IMR-90 (cell line): ENCODE measurements at regions of chr3 and their contacts with region 1.

Region 1: GRCh38 chr3:38521391-38521987 is 25.3 kb downstream of the EXOG start:
- DNase-seq: peak; percentile 75
- ATAC-seq: peak; percentile 67
- H3K4me3 ChIP-seq: no peak overlapping the region
- H3K27ac ChIP-seq: no peak overlapping the region
- H3K4me1 ChIP-seq: peaks cover 5% of the 10 kb centered on the region
- H3K27me3 ChIP-seq: no peaks in the 10 kb centered on the region
- CTCF ChIP-seq: peak; percentile 84
- POLR2A ChIP-seq: no peak
- RAD21 ChIP-seq: peak; percentile 75

Region 2: GRCh38 chr3:37202035-37202434 is 1319.5 kb before region 1 on chr3:
- CTCF ChIA-PET with region 1: no interaction called
- POLR2A ChIA-PET with region 1: no interaction called
- dilution Hi-C with region 1: no loop called
- in situ Hi-C with region 1: no loop called
- intact Hi-C with region 1: no loop called
- DNase-seq: no peak
- ATAC-seq: no peak
- H3K4me3 ChIP-seq: no peak overlapping the region
- H3K27ac ChIP-seq: no peak overlapping the region
- H3K4me1 ChIP-seq: peaks cover 10% of the 10 kb centered on the region; the same call in 1 of the 2 replicates
- H3K27me3 ChIP-seq: no peaks in the 10 kb centered on the region
- CTCF ChIP-seq: no peak
- POLR2A ChIP-seq: no peak
- RAD21 ChIP-seq: no peak

Region 3: GRCh38 chr3:37627951-37628620 is 893.4 kb before region 1 on chr3:
- CTCF ChIA-PET with region 1: no interaction called
- POLR2A ChIA-PET with region 1: no interaction called
- dilution Hi-C with region 1: no loop called
- in situ Hi-C with region 1: no loop called
- intact Hi-C with region 1: no loop called
- DNase-seq: no peak
- ATAC-seq: no peak
- H3K4me3 ChIP-seq: no peak overlapping the region
- H3K27ac ChIP-seq: no peak overlapping the region
- H3K4me1 ChIP-seq: no peaks in the 10 kb centered on the region
- H3K27me3 ChIP-seq: no peaks in the 10 kb centered on the region; the same call in 1 of the 2 replicates
- CTCF ChIP-seq: no peak
- POLR2A ChIP-seq: no peak
- RAD21 ChIP-seq: no peak

Region 4: DNA sequence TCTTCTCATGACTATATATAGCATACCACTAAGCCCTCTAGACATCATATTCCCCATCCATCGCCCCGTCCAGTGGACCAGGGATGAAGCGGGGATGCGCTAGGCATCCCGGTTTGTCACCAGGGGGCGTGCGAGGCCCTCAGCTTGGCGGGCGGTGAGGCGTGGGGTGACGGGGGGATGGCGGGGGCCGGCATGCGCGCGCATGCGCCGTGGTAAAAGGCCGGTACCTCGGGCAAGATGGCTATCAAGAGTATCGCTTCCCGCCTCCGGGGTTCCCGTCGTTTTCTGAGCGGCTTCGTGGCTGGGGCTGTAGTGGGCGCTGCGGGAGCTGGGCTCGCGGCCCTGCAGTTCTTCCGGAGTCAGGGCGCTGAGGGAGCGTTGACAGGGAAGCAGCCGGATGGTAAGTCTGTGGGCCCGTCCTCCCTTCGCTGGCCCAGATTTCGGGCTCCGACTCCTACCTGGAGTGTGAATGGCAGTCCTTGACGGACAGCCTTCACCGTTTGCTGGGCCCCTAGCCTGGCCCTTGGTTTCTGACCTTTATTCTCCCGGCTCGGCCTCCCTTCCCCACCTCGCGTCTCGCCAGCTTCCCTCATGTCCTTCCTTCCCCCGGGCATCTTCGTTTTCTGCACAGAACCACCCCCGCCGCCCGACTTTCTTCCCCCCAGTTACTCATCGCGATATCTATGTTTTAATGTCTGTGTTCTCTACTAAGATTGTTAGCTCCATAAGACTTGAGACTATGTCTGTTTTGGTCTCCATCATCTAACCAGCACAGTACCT is 25.2 kb before region 1 on chr3 and contains the start of gene EXOG:
- CTCF ChIA-PET with region 1: interaction called, 10 read pairs
- POLR2A ChIA-PET with region 1: no interaction called
- dilution Hi-C with region 1: no loop called
- in situ Hi-C with region 1: no loop called
- intact Hi-C with region 1: no loop called
- DNase-seq: peak; percentile 89
- ATAC-seq: peak; percentile 85
- H3K4me3 ChIP-seq: peak within 1 kb of the TSS; percentile 91
- H3K27ac ChIP-seq: peak within 1 kb of the TSS; percentile 91
- H3K4me1 ChIP-seq: peaks cover 11% of the 10 kb centered on the region
- H3K27me3 ChIP-seq: no peaks in the 10 kb centered on the region
- CTCF ChIP-seq: peak; percentile 84
- POLR2A ChIP-seq: 0 out of 2 replicates have a peak, but pooled peaks have one; percentile 20
- RAD21 ChIP-seq: peak; percentile 68
- total RNA-seq, gene EXOG: 10.2 and 12.8 TPM in 2 replicates

Region 5: DNA sequence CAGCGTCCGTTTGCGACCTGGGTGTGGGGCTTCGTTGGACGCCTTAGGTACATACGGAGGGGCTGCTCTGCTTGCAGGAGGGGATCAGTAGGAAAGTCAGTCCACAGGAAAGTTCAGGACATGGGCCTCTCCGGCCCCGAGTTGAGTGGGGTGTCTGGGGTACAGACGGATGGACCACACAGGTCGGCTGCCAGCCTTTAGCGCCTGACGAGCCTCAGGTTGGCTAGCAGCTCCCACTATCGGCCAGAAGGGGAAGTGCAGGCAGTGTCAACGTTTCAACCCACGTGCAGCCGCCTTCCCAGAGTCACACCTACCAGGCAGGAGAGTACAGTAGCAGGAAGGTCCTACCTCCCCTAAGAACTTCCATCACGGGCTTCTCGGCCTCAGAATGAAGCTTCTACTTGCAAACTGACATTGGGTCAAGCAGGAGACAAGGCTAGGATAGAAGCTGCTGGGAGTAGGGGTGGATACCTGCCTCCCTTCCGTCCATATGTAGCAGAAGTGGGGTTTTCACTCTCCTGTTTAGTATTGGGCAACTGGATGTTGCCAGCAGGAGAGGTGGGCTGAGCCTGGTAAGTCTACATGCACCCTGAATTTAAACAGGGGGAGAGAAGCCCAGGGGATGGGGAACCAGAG is 129.8 kb after region 1 on chr3:
- CTCF ChIA-PET with region 1: interaction called, 32 read pairs
- POLR2A ChIA-PET with region 1: no interaction called
- dilution Hi-C with region 1: no loop called
- in situ Hi-C with region 1: no loop called
- intact Hi-C with region 1: loop called (anchors 1 kb)
- DNase-seq: peak; percentile 52
- ATAC-seq: peak; percentile 59
- H3K4me3 ChIP-seq: no peak overlapping the region
- H3K27ac ChIP-seq: no peak overlapping the region
- H3K4me1 ChIP-seq: peaks cover 3% of the 10 kb centered on the region
- H3K27me3 ChIP-seq: peaks cover 11% of the 10 kb centered on the region
- CTCF ChIP-seq: peak; percentile 93
- POLR2A ChIP-seq: no peak
- RAD21 ChIP-seq: peak; percentile 85

Region 6: GRCh38 chr3:38738630-38739395 is 217.3 kb after region 1 on chr3:
- CTCF ChIA-PET with region 1: no interaction called
- POLR2A ChIA-PET with region 1: no interaction called
- dilution Hi-C with region 1: no loop called
- in situ Hi-C with region 1: no loop called
- intact Hi-C with region 1: loop called (anchors 10 kb)
- DNase-seq: peak; percentile 28
- ATAC-seq: peak; percentile 49; the same call in 1 of the 2 replicates
- H3K4me3 ChIP-seq: no peak overlapping the region
- H3K27ac ChIP-seq: no peak overlapping the region
- H3K4me1 ChIP-seq: no peaks in the 10 kb centered on the region
- H3K27me3 ChIP-seq: 0 out of 2 replicates have a peak, but pooled peaks cover 2% of the 10 kb centered on the region
- CTCF ChIP-seq: peak; percentile 59
- POLR2A ChIP-seq: no peak
- RAD21 ChIP-seq: peak; percentile 62

Region 7: DNA sequence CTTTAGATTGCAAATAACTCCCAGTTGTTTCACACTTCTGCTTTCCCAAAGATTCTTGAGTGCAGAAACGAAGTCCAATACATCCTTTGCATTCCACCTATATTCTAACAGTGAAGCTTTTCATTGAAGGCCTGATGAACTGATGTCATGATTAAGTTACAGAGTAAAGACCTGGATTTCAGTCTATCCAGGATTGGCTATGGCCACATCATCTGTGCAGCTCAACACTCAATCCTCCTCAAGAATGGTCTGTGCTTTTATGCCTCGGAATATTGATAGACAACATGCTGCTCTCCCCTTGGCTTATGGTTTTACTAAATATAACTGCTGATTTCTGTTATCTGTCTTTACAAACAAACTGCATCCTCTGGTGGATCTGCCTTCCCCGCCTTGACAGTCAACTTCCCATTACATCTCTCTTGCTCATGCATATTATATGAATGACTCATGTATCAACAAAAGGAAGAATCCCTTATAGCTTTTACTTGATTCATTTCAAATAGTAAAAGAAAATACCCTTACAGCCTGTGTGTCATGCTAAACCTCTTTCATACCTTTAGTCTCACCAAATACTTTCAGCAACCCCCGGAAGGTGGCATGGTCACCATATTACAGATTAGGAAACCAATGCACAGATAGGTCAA is 470.8 kb after region 1 on chr3:
- CTCF ChIA-PET with region 1: no interaction called
- POLR2A ChIA-PET with region 1: no interaction called
- dilution Hi-C with region 1: no loop called
- in situ Hi-C with region 1: loop called (anchors 10 kb)
- intact Hi-C with region 1: no loop called
- DNase-seq: peak; percentile 91
- ATAC-seq: peak; percentile 86
- H3K4me3 ChIP-seq: no peak overlapping the region
- H3K27ac ChIP-seq: peak overlapping the region; percentile 75
- H3K4me1 ChIP-seq: peaks cover 22% of the 10 kb centered on the region
- H3K27me3 ChIP-seq: no peaks in the 10 kb centered on the region
- CTCF ChIP-seq: no peak
- POLR2A ChIP-seq: no peak
- RAD21 ChIP-seq: no peak

Region 8: GRCh38 chr3:39000008-39000450 is 478.5 kb after region 1 on chr3:
- CTCF ChIA-PET with region 1: interaction called, 11 read pairs
- POLR2A ChIA-PET with region 1: no interaction called
- dilution Hi-C with region 1: no loop called
- in situ Hi-C with region 1: loop called (anchors 10 kb)
- intact Hi-C with region 1: loop called (anchors 2 kb)
- DNase-seq: peak; percentile 79
- ATAC-seq: peak; percentile 78
- H3K4me3 ChIP-seq: no peak overlapping the region
- H3K27ac ChIP-seq: no peak overlapping the region
- H3K4me1 ChIP-seq: peaks cover 1% of the 10 kb centered on the region; the same call in 1 of the 2 replicates
- H3K27me3 ChIP-seq: no peaks in the 10 kb centered on the region
- CTCF ChIP-seq: peak; percentile 99
- POLR2A ChIP-seq: peak; percentile 29; the same call in 1 of the 2 replicates
- RAD21 ChIP-seq: peak; percentile 87

Region 9: GRCh38 chr3:39025222-39025970 is 503.9 kb after region 1 on chr3:
- CTCF ChIA-PET with region 1: interaction called, 5 read pairs
- POLR2A ChIA-PET with region 1: no interaction called
- dilution Hi-C with region 1: no loop called
- in situ Hi-C with region 1: no loop called
- intact Hi-C with region 1: loop called (anchors 1 kb)
- DNase-seq: no peak
- ATAC-seq: no peak; the same call in 1 of the 2 replicates
- H3K4me3 ChIP-seq: no peak overlapping the region
- H3K27ac ChIP-seq: no peak overlapping the region
- H3K4me1 ChIP-seq: no peaks in the 10 kb centered on the region
- H3K27me3 ChIP-seq: peaks cover 12% of the 10 kb centered on the region
- CTCF ChIP-seq: no peak
- POLR2A ChIP-seq: no peak
- RAD21 ChIP-seq: no peak